ENCODE measurements at regions of chr13 and their contacts with region 1.

Region 1: GRCh38 chr13:29771247-29771646 is 79.2 kb downstream of the UBL3 start:
- DNase-seq: peak in 2 of 35 experiments; percentile 10 to 70
- ATAC-seq: peak; percentile 41 to 75 (median 46)
- H3K4me3 ChIP-seq: no peak overlapping the region
- H3K4me3 Mint-ChIP-seq: no peak overlapping the region
- H3K27ac ChIP-seq: no peak overlapping the region
- H3K27ac Mint-ChIP-seq: no peak overlapping the region
- H3K4me1 ChIP-seq: no peaks in the 10 kb centered on the region
- H3K4me1 Mint-ChIP-seq: peaks cover 5 to 7% (median 6%) of the 10 kb centered on the region in 3 donors
- H3K27me3 ChIP-seq: no peaks in the 10 kb centered on the region
- H3K27me3 Mint-ChIP-seq: no peaks in the 10 kb centered on the region

Region 2: DNA sequence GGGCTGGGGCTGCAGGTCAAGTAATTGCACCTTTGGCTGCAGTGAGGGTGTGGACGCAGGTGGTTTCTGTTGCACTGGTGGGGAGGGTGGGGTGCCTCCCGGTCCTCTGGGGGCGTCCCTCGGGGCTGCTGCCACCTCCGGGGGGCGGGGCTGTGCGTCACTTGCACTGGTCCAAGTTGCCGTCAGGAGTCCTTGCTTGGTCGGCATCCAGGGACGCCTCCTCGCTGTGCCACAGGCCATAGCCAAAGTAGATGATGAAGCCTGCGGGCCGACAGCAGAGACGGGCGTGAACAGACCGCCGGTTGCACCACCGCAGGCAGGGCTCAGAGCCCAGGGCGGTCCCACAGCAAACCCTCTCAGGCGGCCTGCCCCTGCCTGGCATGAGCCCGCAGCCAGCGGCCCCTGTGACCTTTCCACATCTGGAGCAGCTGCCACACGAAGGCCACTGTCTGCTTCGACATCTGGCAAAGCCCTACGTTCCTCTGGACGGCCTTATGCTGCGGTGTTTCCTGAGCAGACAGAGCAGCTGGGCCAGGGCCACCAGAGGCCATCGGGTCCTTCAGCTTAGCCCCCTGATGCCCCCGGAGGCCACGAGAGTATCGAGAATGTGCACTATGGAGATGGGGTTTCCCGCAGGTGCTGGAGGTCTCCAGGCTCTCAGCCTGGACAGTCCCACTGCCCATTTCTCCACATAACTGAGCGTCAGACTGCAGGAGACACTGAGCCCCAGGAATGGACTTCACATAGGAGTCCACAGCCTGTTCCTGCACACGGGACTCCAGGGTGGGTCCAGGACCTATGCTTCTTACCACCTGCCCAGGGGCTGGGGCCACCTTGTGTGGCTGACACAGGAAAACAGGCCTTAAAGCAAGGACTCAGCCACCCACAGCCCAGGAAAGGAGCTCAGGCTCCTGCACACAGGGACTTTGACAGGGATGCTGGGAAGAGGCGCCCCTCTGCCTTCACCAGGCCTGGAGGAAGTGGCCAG is 256.6 kb before region 1 on chr13:
- CTCF ChIA-PET with region 1: no interaction called
- POLR2A ChIA-PET with region 1: no interaction called
- DNase-seq: no peak
- ATAC-seq: no peak
- H3K4me3 ChIP-seq: no peak overlapping the region
- H3K4me3 Mint-ChIP-seq: no peak overlapping the region
- H3K27ac ChIP-seq: no peak overlapping the region
- H3K27ac Mint-ChIP-seq: peak overlapping the region in 1 of 2 donors; percentile 4
- H3K4me1 ChIP-seq: no peaks in the 10 kb centered on the region
- H3K4me1 Mint-ChIP-seq: no peaks in the 10 kb centered on the region
- H3K27me3 ChIP-seq: no peaks in the 10 kb centered on the region
- H3K27me3 Mint-ChIP-seq: no peaks in the 10 kb centered on the region

Region 3: GRCh38 chr13:29840585-29840984 is 69.3 kb after region 1 on chr13:
- CTCF ChIA-PET with region 1: interaction called, 4 to 20 read pairs
- POLR2A ChIA-PET with region 1: no interaction called
- DNase-seq: no peak
- ATAC-seq: no peak
- H3K4me3 ChIP-seq: no peak overlapping the region
- H3K4me3 Mint-ChIP-seq: no peak overlapping the region
- H3K27ac ChIP-seq: no peak overlapping the region
- H3K27ac Mint-ChIP-seq: no peak overlapping the region
- H3K4me1 ChIP-seq: peaks cover 3 to 6% of the 10 kb centered on the region in 2 experiments
- H3K4me1 Mint-ChIP-seq: peaks cover 78 to 87% (median 84%) of the 10 kb centered on the region in 3 donors
- H3K27me3 ChIP-seq: no peaks in the 10 kb centered on the region
- H3K27me3 Mint-ChIP-seq: no peaks in the 10 kb centered on the region

Region 4: DNA sequence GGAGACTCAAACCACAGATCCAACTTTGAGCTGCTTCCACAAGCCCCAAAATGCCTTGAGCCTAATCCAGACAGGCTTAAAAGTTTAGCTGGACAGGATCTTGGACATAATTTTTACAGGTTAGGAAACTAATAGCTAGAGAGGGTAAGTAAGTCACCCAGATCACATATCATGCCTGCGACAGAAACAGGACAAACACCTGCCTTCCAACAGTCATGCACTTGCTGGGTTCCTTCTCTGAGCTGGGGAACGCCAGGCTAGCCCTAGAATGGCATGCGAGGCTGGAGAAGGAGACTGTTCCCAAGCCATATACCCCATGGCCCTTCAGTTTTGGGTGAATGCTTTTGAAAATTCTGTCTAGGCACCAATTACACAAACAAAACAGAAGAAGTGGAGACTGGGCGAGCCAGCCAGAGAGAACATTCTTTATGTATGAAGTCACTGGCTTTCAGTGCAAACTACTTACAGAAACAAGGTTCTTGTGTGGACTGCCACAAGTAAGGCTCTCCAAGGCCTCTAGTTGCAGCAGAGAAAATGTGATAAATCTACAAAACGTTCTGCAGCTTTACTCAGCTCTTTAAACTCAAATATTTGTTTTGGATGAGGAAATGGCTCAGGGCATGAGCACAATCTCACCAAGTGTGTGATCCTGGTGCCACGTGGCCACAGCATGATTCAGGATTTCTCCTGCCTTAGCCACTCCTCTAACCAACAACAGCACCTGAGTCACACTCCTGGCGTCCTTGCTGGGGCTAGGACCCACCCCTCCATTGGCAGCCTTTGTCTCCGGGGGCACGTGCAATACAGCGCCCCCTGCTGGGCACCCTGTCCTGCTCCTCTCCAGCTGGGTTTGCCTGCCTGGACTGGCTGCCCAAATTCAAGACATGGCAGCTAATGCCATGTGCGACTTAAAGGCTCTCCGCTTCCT is 152.6 kb after region 1 on chr13:
- CTCF ChIA-PET with region 1: interaction called, 5 to 13 read pairs
- POLR2A ChIA-PET with region 1: no interaction called
- DNase-seq: peak in 29 of 35 experiments; percentile 4 to 65 (median 29)
- ATAC-seq: peak; percentile 56 to 75 (median 70)
- H3K4me3 ChIP-seq: no peak overlapping the region
- H3K4me3 Mint-ChIP-seq: no peak overlapping the region
- H3K27ac ChIP-seq: no peak overlapping the region
- H3K27ac Mint-ChIP-seq: peak overlapping the region in 1 of 2 donors; percentile 30
- H3K4me1 ChIP-seq: peaks cover 12 to 18% of the 10 kb centered on the region in 2 experiments
- H3K4me1 Mint-ChIP-seq: peaks cover 11 to 27% (median 24%) of the 10 kb centered on the region in 3 donors
- H3K27me3 ChIP-seq: peaks cover 0 to 2% of the 10 kb centered on the region in 2 experiments
- H3K27me3 Mint-ChIP-seq: peaks cover 0 to 2% of the 10 kb centered on the region in 2 donors

Region 5: DNA sequence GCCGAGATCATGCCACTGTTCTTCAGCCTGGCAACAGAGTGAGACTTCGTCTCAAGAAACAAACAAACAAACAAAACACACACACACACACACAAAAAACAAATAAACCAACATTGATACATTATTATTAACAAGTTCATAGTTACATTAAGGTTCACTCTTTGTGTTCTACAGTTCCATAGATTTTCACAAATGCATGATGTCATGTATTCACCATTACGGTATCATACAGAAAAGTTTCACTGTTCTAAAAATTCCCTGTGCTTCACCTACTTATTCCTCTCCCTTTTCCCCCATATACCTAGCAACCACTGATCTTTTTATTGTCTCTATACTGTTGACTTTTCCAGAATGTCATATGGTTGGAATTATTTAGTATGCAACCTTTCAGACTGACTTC is 198.8 kb after region 1 on chr13:
- CTCF ChIA-PET with region 1: interaction called, 4 to 10 read pairs
- POLR2A ChIA-PET with region 1: no interaction called
- DNase-seq: no peak
- ATAC-seq: no peak
- H3K4me3 ChIP-seq: no peak overlapping the region
- H3K4me3 Mint-ChIP-seq: no peak overlapping the region
- H3K27ac ChIP-seq: no peak overlapping the region
- H3K27ac Mint-ChIP-seq: no peak overlapping the region
- H3K4me1 ChIP-seq: no peaks in the 10 kb centered on the region
- H3K4me1 Mint-ChIP-seq: peaks cover 0 to 5% (median 4%) of the 10 kb centered on the region in 3 donors
- H3K27me3 ChIP-seq: no peaks in the 10 kb centered on the region
- H3K27me3 Mint-ChIP-seq: no peaks in the 10 kb centered on the region

Region 6: DNA sequence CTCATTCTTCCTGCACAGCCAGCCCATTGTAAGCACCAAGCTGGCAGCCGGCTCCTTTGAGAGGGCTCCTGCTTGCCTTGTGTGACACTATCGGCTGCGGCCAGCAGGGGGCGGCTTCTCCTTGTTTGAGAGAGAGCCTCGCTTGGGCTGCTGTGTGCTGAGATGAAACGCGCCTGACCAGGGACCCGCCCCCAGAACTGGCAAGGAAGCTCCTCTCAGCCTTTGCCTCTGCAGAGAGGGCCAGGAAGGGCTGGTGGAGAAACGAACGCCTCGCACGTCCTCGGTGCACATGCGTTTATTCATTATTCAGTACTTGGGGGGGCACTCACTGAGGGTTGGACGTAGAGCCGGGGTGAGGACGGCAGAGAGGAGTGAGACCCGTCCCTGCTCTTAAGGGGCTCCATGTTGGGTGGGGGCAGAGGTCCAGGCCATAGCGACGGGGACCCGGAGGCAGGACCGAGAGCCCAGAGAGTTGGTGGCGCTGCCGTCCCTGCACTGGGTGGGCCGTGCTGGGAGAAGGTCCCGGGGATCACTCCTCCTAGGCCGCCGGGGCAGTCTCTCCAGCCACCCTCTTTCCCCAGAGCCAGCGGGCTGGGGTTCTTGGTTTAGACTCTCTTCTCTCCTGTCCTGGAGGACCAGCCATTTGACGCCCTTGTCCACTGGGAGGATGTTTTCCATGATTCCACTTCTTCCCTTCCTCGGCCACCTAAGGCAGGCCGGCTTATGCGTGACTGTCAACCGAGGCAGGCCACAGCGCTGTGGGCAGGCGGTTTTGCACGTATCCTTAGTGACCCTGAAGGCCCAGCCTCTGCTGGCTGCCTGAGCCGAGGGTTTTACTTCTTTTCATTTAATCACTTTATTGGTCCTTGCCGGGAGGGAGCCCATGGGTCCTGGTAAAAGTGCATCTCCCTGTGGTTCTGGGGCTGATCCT is 361.6 kb after region 1 on chr13:
- CTCF ChIA-PET with region 1: interaction called, 4 to 19 read pairs
- POLR2A ChIA-PET with region 1: no interaction called
- DNase-seq: peak; percentile 88 to 99 (median 96)
- ATAC-seq: peak; percentile 99
- H3K4me3 ChIP-seq: no peak overlapping the region
- H3K4me3 Mint-ChIP-seq: peak overlapping the region; percentile 32 to 60 (median 47)
- H3K27ac ChIP-seq: no peak overlapping the region
- H3K27ac Mint-ChIP-seq: peak overlapping the region; percentile 70 to 79
- H3K4me1 ChIP-seq: peaks cover 2 to 20% of the 10 kb centered on the region in 2 experiments
- H3K4me1 Mint-ChIP-seq: peaks cover 14 to 27% (median 17%) of the 10 kb centered on the region in 3 donors
- H3K27me3 ChIP-seq: no peaks in the 10 kb centered on the region
- H3K27me3 Mint-ChIP-seq: no peaks in the 10 kb centered on the region

Measured in T-cell (primary cell).